Heart left ventricle (tissue), 16 donors: ENCODE measurements at regions of chr5 and their contacts with region 1.

Region 1: GRCh38 chr5:80083101-80083890 is 48.1 kb downstream of the THBS4 start:
- DNase-seq: peak in 2 of 5 donors; percentile 23 to 34
- ATAC-seq: peak; percentile 54 to 85 (median 82)
- H3K4me3 ChIP-seq: peak overlapping the region in 11 of 12 donors; percentile 2 to 49 (median 42)
- H3K27ac ChIP-seq: peak overlapping the region in 11 of 12 donors; percentile 40 to 80 (median 64)
- H3K4me1 ChIP-seq: peaks cover 0 to 23% (median 11%) of the 10 kb centered on the region in 12 donors
- H3K27me3 ChIP-seq: no peaks in the 10 kb centered on the region
- CTCF ChIP-seq: peak; percentile 63 to 89 (median 74)
- POLR2A ChIP-seq: no peak

Region 2: DNA sequence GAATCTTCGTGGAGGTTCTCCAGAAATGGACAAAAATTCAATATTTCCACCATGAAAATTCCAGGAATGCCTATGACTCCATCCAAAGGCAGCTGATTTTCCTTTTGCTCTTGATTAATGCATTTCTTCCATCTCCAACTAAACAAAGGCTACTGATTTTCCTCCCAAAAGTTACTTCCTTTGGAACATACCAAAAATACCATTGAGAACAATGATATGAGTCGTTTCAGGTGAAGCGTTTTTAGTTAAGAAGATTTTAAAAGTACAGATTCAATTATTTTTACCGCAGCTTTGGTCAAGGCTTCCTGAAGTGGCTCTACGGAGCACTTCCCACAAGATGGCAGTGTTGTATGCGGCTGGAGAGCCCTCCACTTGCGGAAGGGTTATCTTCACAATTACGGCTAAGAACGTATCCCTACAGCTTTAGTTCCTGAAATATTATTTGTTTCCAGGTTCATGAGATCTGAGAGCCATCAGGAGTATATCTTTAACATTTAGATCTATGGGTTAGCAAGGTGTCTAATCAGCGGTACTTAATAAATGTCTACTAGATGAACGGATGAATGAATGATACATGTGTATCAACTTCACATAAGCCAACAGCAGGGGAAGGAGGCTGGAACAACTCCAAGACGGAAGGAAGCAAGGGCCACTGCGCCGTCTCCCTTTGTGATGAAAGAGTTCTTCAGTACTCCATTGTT is 1062.3 kb before region 1 on chr5:
- intact Hi-C with region 1: loop called in 5 of 10 experiments (anchors 2 to 10 kb)
- DNase-seq: peak in 4 of 5 donors; percentile 28 to 47 (median 44)
- ATAC-seq: peak; percentile 64 to 91 (median 84)
- H3K4me3 ChIP-seq: peak overlapping the region in 5 of 12 donors; percentile 8 to 39 (median 23)
- H3K27ac ChIP-seq: no peak overlapping the region
- H3K4me1 ChIP-seq: peaks cover 0 to 11% (median 4%) of the 10 kb centered on the region in 12 donors
- H3K27me3 ChIP-seq: no peaks in the 10 kb centered on the region
- CTCF ChIP-seq: peak; percentile 64 to 89 (median 78)
- POLR2A ChIP-seq: no peak

Region 3: GRCh38 chr5:79552984-79553383 is 530.3 kb before region 1 on chr5:
- intact Hi-C with region 1: loop called in 3 of 10 experiments (anchors 2 to 5 kb)
- DNase-seq: no peak
- ATAC-seq: peak in 1 of 4 donors; percentile 32
- H3K4me3 ChIP-seq: no peak overlapping the region
- H3K27ac ChIP-seq: no peak overlapping the region
- H3K4me1 ChIP-seq: peaks cover 0 to 9% (median 0%) of the 10 kb centered on the region in 12 donors
- H3K27me3 ChIP-seq: no peaks in the 10 kb centered on the region
- CTCF ChIP-seq: no peak
- POLR2A ChIP-seq: no peak

Region 4: GRCh38 chr5:79857714-79858409 is 225.4 kb before region 1 on chr5:
- intact Hi-C with region 1: loop called (anchors 2 to 10 kb)
- DNase-seq: peak; percentile 60 to 83 (median 73)
- ATAC-seq: peak; percentile 38 to 69 (median 58)
- H3K4me3 ChIP-seq: no peak overlapping the region
- H3K27ac ChIP-seq: no peak overlapping the region
- H3K4me1 ChIP-seq: peaks cover 0 to 23% (median 3%) of the 10 kb centered on the region in 12 donors
- H3K27me3 ChIP-seq: no peaks in the 10 kb centered on the region
- CTCF ChIP-seq: peak; percentile 87 to 97 (median 96)
- POLR2A ChIP-seq: no peak

Region 5: DNA sequence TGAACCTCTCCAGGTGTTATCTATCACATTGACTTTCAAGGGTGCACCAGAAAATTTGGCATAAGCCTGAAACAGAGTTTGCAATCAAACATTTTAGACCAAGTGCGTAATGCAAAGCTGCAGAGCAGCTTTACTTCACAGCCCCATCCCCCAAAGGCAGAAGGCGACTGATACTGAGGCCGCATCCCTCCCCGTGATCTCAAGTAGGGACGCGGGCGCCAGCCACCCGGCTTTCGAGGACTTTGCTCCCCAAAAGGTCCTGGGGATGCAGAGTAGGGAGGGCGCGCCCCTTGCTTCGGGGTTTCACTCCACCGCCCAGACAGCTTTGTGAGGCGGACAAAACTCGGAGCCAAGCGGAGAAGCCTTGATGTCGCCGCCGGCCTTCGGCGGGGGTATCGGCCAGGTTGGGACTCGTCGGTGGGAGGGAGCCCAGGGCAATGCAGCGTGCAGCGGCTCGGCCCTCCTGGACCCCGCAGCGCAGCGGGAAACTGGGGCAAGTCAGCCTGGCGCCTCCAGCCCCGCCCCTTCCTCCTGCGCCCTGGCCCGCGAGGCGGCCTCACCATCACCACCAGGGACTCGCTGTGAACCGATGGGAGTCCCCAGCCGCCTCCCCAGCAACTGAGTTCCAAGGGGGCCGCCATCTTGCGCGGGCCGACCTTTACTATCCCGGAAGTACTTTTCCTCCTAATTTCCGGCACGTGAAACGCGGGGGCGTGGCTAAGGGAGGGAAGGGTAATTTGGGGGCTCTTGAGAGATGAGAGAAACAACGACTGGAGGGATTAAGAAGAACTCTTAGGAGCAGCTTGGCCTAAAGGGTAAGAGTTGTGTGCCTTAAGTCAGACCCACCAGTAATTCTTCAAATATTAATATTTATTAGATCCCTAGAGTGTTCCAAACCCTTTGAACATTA is 92.4 kb before region 1 on chr5 and contains the start of gene MTX3:
- intact Hi-C with region 1: loop called in 2 of 10 experiments (anchors 5 kb)
- DNase-seq: peak; percentile 82 to 91 (median 88)
- ATAC-seq: peak; percentile 87 to 98 (median 96)
- H3K4me3 ChIP-seq: peak within 1 kb of the TSS; percentile 53 to 99 (median 82)
- H3K27ac ChIP-seq: peak within 1 kb of the TSS; percentile 26 to 86 (median 72)
- H3K4me1 ChIP-seq: peaks cover 0 to 27% (median 12%) of the 10 kb centered on the region in 12 donors
- H3K27me3 ChIP-seq: no peaks in the 10 kb centered on the region
- CTCF ChIP-seq: peak in 1 of 12 donors; percentile 14
- POLR2A ChIP-seq: no peak
- total RNA-seq, gene MTX3: 6.2 to 14.4 (median 12.1) TPM

Region 6: GRCh38 chr5:80369521-80369920 is 286.2 kb after region 1 on chr5:
- intact Hi-C with region 1: no loop called
- DNase-seq: no peak
- ATAC-seq: no peak
- H3K4me3 ChIP-seq: no peak overlapping the region
- H3K27ac ChIP-seq: no peak overlapping the region
- H3K4me1 ChIP-seq: peaks cover 0 to 7% (median 0%) of the 10 kb centered on the region in 12 donors
- H3K27me3 ChIP-seq: peaks cover 0 to under 1% (median 0%) of the 10 kb centered on the region in 9 donors
- CTCF ChIP-seq: no peak
- POLR2A ChIP-seq: no peak

Region 7: GRCh38 chr5:80516826-80517225 is 433.5 kb after region 1 on chr5:
- intact Hi-C with region 1: no loop called
- DNase-seq: no peak
- ATAC-seq: no peak
- H3K4me3 ChIP-seq: no peak overlapping the region
- H3K27ac ChIP-seq: no peak overlapping the region
- H3K4me1 ChIP-seq: no peaks in the 10 kb centered on the region
- H3K27me3 ChIP-seq: no peaks in the 10 kb centered on the region
- CTCF ChIP-seq: no peak
- POLR2A ChIP-seq: no peak